ENCODE measurements at regions of chr9 and their contacts with region 1.

Region 1: GRCh38 chr9:83937911-83938323 is 16.7 kb upstream of the KIF27 start:
- DNase-seq: peak; percentile 83
- H3K4me3 ChIP-seq: no peak overlapping the region
- H3K27ac ChIP-seq: no peak overlapping the region
- H3K4me1 ChIP-seq: peaks cover 32% of the 10 kb centered on the region
- H3K27me3 ChIP-seq: no peaks in the 10 kb centered on the region
- CTCF ChIP-seq: peak; percentile 68

Region 2: DNA sequence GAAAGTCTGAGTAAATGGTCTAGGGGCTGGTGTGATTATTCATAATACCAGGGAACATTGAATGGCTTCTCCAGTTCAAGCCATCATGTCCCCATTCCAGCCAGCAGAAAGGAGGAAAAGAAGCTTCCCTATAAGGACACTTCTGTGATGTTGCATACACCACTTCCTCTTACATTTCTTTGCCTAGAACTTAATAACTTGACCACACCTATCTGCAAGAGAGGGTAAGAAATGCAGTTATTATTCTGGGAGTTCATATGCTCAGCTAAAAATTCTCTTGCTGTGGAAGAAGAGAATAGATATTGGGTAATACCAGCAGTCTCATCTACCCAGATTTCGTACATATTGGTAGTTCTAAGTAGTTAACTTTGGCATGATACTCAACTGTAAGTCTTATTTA is 236.6 kb after region 1 on chr9:
- CTCF ChIA-PET with region 1: no interaction called
- POLR2A ChIA-PET with region 1: no interaction called
- intact Hi-C with region 1: loop called (anchors 1 kb)
- DNase-seq: no peak
- H3K4me3 ChIP-seq: no peak overlapping the region
- H3K27ac ChIP-seq: no peak overlapping the region
- H3K4me1 ChIP-seq: no peaks in the 10 kb centered on the region
- H3K27me3 ChIP-seq: no peaks in the 10 kb centered on the region
- CTCF ChIP-seq: no peak

Region 3: DNA sequence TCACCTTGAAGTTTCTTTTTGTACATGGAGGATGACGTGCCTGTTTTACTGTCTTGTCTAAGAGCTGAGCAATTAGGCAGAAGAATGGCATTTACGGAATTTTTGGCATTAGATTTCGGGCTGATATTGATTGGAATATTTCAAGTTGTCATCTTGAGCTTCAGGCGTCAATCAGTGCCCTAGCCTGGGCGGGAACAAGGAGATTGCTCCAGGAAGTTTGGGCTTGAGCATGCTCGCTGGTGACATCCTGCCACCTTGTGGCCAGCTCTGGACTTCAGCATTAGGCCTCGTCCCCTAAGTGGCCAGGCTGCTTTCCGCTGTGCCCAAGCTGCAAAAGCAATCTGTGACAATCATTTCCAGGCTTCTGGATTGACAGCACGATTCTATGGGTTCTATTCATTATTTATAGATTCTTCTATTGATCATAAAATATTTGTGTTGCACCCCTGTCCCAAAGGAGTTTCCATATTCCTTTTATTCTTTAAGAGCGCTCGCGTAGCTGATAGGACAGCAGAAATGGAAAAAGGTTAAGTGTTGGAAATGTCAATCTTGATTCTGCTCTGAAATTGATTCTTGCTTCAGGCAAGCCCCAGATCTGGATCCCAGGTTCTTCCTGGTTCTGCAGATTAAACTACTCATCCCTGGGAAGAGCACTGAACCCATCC is 323.3 kb after region 1 on chr9:
- CTCF ChIA-PET with region 1: interaction called, 4 read pairs
- POLR2A ChIA-PET with region 1: interaction called, 3 read pairs
- intact Hi-C with region 1: loop called (anchors 1 kb)
- DNase-seq: peak; percentile 82
- H3K4me3 ChIP-seq: no peak overlapping the region
- H3K27ac ChIP-seq: no peak overlapping the region
- H3K4me1 ChIP-seq: no peaks in the 10 kb centered on the region
- H3K27me3 ChIP-seq: no peaks in the 10 kb centered on the region
- CTCF ChIP-seq: peak; percentile 87

Region 4: DNA sequence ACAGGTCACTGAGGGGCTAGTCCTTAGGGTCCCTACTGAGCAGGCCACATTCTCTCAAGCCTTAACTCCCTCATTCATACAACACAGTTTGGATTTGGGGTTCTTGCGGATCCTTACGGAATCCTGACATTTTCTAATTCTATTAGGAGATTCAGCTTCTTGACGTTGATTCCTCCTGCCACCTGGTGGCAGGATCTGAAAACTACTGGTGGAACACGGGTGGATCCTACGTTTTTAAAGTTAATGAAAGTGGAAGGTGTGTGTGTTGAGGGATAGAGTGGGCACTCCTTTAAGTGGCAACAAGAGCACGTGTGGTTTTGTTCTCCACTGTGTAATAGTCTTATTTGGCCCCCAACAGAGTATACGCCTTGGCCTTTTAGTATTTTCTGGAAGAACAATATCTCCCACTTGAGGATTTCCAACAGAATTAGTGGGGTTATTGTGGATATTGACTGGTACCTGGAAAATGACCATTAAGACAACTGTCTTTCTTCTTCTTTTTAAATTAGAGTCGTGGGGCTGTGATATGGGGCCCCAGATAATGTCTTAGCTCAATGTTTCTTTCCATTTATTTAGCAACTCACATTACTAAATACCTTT is 377.5 kb after region 1 on chr9:
- CTCF ChIA-PET with region 1: no interaction called
- POLR2A ChIA-PET with region 1: no interaction called
- intact Hi-C with region 1: loop called (anchors 1 kb)
- DNase-seq: peak; percentile 69
- H3K4me3 ChIP-seq: no peak overlapping the region
- H3K27ac ChIP-seq: no peak overlapping the region
- H3K4me1 ChIP-seq: no peaks in the 10 kb centered on the region
- H3K27me3 ChIP-seq: no peaks in the 10 kb centered on the region
- CTCF ChIP-seq: peak; percentile 81